Caco-2 (cell line): ENCODE measurements at regions of chr20 and their contacts with region 1.

Region 1: GRCh38 chr20:48620519-48621254 is 207.1 kb downstream of the PREX1 start:
- DNase-seq: peak; percentile 94 to 98
- H3K4me3 ChIP-seq: peak overlapping the region; percentile 20
- H3K4me3 Mint-ChIP-seq: peak overlapping the region; percentile 70
- H3K27ac Mint-ChIP-seq: peak overlapping the region; percentile 31
- H3K4me1 ChIP-seq: peaks cover 11% of the 10 kb centered on the region
- H3K4me1 Mint-ChIP-seq: peaks cover 6% of the 10 kb centered on the region
- H3K27me3 ChIP-seq: no peaks in the 10 kb centered on the region
- H3K27me3 Mint-ChIP-seq: no peaks in the 10 kb centered on the region
- CTCF ChIP-seq: peak; percentile 99 to 100

Region 2: DNA sequence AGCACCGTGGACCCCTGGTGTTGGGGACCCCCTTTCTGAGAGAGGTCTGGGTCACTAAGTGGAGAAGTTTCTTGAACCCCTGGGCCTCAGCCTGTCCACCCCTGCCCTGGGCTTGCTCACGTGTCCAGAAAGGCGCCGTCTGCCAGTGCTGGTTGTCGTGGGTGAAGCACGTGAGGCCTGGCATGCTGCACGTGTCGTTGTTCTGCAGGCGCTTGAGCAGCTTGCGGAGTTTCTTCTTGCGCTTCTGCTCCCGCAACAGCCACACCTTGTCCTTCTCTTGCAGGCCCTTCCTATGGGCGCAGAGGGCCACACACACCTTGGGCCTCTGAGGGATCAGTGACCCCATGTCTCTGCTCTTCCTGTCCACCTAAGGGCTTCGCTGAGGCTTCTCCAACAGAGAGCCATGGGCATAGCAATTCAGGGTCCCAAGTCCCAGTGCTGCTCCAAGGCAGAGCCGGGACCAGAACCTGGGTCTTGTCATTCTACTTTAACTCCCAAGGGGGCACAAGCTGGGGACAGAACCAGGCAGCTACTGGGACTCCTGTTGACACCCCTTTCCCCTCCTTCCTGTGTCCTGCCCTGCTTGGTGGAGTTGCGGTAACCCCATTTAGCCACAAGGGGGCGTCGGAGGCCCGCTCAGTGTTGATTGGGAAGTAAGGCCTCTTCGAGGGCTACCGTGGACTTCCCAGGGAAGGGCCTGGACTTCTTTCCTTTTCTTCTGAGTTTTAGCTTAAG is 957.2 kb before region 1 on chr20:
- CTCF ChIA-PET with region 1: interaction called, 20 read pairs
- POLR2A ChIA-PET with region 1: no interaction called
- intact Hi-C with region 1: loop called (anchors 1 kb)
- DNase-seq: peak; percentile 92 to 97
- H3K4me3 ChIP-seq: no peak overlapping the region
- H3K4me3 Mint-ChIP-seq: no peak overlapping the region
- H3K27ac Mint-ChIP-seq: peak overlapping the region; percentile 56
- H3K4me1 ChIP-seq: peaks cover 16% of the 10 kb centered on the region
- H3K4me1 Mint-ChIP-seq: peaks cover 18% of the 10 kb centered on the region
- H3K27me3 ChIP-seq: no peaks in the 10 kb centered on the region
- H3K27me3 Mint-ChIP-seq: no peaks in the 10 kb centered on the region
- CTCF ChIP-seq: peak; percentile 99 to 100

Region 3: DNA sequence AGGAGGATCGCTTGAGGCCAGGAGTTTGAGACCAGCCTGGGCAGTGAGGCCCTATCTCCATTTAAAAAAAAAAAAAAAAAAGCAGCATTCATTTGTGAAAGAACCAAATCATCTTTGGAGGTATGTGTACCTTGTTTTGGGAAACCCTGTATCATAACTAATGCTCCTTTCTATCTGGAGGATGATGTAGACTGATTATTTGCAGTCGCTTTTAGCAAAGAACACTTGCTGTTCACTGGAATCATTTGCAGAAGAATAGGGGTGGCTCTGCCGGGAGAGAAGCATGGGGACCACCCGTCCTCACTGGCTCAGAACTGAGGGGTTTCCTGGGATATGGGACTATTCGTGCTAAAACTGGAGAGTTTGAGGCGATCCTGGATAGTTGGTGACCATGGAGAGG is 766.5 kb before region 1 on chr20:
- CTCF ChIA-PET with region 1: interaction called, 5 read pairs
- POLR2A ChIA-PET with region 1: no interaction called
- intact Hi-C with region 1: loop called (anchors 1 kb)
- DNase-seq: no peak
- H3K4me3 ChIP-seq: no peak overlapping the region
- H3K4me3 Mint-ChIP-seq: no peak overlapping the region
- H3K27ac Mint-ChIP-seq: no peak overlapping the region
- H3K4me1 ChIP-seq: peaks cover 13% of the 10 kb centered on the region
- H3K4me1 Mint-ChIP-seq: peaks cover 13% of the 10 kb centered on the region
- H3K27me3 ChIP-seq: no peaks in the 10 kb centered on the region
- H3K27me3 Mint-ChIP-seq: peaks cover 8% of the 10 kb centered on the region
- CTCF ChIP-seq: no peak

Region 4: GRCh38 chr20:48118073-48118878 is 502.4 kb before region 1 on chr20:
- CTCF ChIA-PET with region 1: no interaction called
- POLR2A ChIA-PET with region 1: no interaction called
- intact Hi-C with region 1: no loop called
- DNase-seq: no peak
- H3K4me3 ChIP-seq: no peak overlapping the region
- H3K4me3 Mint-ChIP-seq: no peak overlapping the region
- H3K27ac Mint-ChIP-seq: no peak overlapping the region
- H3K4me1 ChIP-seq: no peaks in the 10 kb centered on the region
- H3K4me1 Mint-ChIP-seq: no peaks in the 10 kb centered on the region
- H3K27me3 ChIP-seq: no peaks in the 10 kb centered on the region
- H3K27me3 Mint-ChIP-seq: peaks cover 12% of the 10 kb centered on the region
- CTCF ChIP-seq: no peak

Region 5: DNA sequence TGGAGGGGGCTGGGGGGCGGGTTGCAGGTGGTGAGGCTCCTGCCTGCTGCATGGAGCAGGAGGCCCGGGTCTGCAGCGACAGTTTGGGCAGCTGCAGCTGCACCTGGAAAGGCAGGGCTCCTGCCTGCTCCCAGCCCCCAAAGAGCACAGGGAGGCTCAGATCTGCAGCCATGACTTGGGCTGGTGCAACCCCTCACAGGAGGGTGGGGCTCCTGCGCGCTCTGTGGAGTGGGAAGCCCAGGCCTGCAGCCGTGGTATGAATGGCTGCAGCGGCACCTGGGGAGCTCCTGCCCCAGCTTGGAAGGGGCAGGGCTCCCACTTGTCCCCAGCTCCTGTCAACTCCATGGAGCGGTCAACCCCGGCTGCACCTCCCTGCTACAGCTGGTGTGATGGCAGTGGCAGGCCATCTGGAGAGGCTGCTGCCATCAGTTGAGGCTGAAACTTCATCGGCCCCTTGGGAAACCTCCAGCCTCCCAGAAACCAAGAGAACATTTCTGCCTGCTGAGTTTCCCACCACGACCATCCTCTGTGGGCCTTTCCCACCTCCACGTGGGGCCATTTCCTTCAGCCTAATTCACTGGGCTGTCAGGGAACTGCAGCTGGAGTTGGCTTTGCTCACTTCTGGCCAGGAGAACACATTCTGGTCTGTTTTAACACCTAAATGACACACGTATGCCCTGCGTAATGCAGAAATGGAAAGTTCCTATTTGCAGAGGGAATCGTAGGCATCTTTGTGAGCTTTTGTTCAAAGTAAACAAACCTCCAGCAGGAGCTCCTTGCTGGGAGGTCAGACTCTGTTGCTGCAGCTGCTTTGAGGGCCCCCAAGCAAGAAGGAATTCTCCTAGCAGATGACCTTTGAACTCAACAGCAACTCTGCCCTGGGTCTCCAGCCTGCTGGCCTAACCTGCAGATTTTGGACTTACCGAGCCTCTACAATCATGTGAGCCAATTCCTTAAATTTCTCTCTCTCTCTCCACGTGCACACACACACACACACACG is 221.9 kb before region 1 on chr20:
- CTCF ChIA-PET with region 1: interaction called, 42 read pairs
- POLR2A ChIA-PET with region 1: no interaction called
- intact Hi-C with region 1: no loop called
- DNase-seq: peak; percentile 91 to 97
- H3K4me3 ChIP-seq: no peak overlapping the region
- H3K4me3 Mint-ChIP-seq: peak overlapping the region; percentile 7
- H3K27ac Mint-ChIP-seq: peak overlapping the region; percentile 91
- H3K4me1 ChIP-seq: peaks cover 54% of the 10 kb centered on the region
- H3K4me1 Mint-ChIP-seq: peaks cover 40% of the 10 kb centered on the region
- H3K27me3 ChIP-seq: no peaks in the 10 kb centered on the region
- H3K27me3 Mint-ChIP-seq: no peaks in the 10 kb centered on the region
- CTCF ChIP-seq: no peak

Region 6: GRCh38 chr20:48489656-48490055 is 131.0 kb before region 1 on chr20:
- CTCF ChIA-PET with region 1: interaction called, 20 read pairs
- POLR2A ChIA-PET with region 1: no interaction called
- intact Hi-C with region 1: loop called (anchors 1 kb)
- DNase-seq: no peak
- H3K4me3 ChIP-seq: no peak overlapping the region
- H3K4me3 Mint-ChIP-seq: no peak overlapping the region
- H3K27ac Mint-ChIP-seq: no peak overlapping the region
- H3K4me1 ChIP-seq: peaks cover 29% of the 10 kb centered on the region
- H3K4me1 Mint-ChIP-seq: peaks cover 27% of the 10 kb centered on the region
- H3K27me3 ChIP-seq: no peaks in the 10 kb centered on the region
- H3K27me3 Mint-ChIP-seq: no peaks in the 10 kb centered on the region
- CTCF ChIP-seq: no peak

Region 7: DNA sequence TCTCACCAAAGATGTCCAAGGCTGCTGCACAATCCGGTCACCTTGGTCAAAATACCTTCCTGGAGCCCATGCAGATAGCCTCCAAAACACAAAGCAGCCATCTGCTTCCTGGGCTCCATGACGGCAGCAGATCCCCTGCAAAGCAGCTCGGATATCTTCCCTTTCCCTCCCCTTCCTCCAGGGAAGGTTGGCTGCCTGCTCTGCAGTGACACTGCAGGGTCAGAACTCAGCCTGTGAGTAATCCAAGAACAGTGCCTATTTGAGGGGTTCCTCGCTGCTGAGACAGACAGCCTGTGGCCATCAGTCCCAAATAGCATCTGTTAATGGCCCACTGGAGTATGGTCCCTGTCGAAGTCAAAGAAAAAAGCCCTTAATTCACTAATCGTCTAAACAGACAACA is 63.7 kb before region 1 on chr20:
- CTCF ChIA-PET with region 1: interaction called, 9 read pairs
- POLR2A ChIA-PET with region 1: no interaction called
- intact Hi-C with region 1: loop called (anchors 1 kb)
- DNase-seq: no peak
- H3K4me3 ChIP-seq: no peak overlapping the region
- H3K4me3 Mint-ChIP-seq: no peak overlapping the region
- H3K27ac Mint-ChIP-seq: no peak overlapping the region
- H3K4me1 ChIP-seq: peaks cover 7% of the 10 kb centered on the region; the same call in 1 of the 2 replicates
- H3K4me1 Mint-ChIP-seq: peaks cover 5% of the 10 kb centered on the region
- H3K27me3 ChIP-seq: no peaks in the 10 kb centered on the region
- H3K27me3 Mint-ChIP-seq: no peaks in the 10 kb centered on the region
- CTCF ChIP-seq: no peak